Transverse colon (tissue), 4 donors: ENCODE measurements at regions of chr7 and their contacts with region 1.

Region 1: DNA sequence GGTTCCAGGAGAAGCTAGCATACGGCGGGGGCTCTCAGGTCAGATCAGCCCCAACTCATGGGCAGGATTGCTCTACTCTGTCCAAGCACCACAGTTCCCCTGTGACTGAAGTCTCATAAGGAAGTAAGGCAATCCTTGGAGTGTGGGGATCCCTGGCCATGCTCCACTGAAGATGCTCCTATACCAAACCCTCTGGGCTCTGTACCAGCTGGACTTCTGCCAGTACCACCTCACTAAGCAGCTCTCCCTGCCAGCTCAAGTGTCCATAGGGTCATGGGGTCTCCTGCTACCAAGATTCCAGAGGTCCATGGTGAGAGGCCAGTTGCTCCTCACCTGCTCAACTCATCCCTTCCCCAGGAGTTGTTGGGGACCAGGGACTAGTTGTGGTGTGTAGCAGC is 355.7 kb upstream of the STEAP1 start:
- DNase-seq: no peak
- H3K4me3 ChIP-seq: no peak overlapping the region
- H3K27ac ChIP-seq: no peak overlapping the region
- H3K4me1 ChIP-seq: no peaks in the 10 kb centered on the region
- H3K27me3 ChIP-seq: no peaks in the 10 kb centered on the region
- CTCF ChIP-seq: no peak
- EP300 ChIP-seq: no peak
- POLR2A ChIP-seq: no peak

Region 2: GRCh38 chr7:89223900-89224395 is 574.6 kb before region 1 on chr7:
- in situ Hi-C with region 1: no loop called
- intact Hi-C with region 1: loop called (anchors 5 kb)
- DNase-seq: no peak
- H3K4me3 ChIP-seq: no peak overlapping the region
- H3K27ac ChIP-seq: no peak overlapping the region
- H3K4me1 ChIP-seq: no peaks in the 10 kb centered on the region
- H3K27me3 ChIP-seq: no peaks in the 10 kb centered on the region
- CTCF ChIP-seq: no peak
- EP300 ChIP-seq: no peak
- POLR2A ChIP-seq: no peak